T-cell (primary cell): ENCODE measurements at regions of chr1 and their contacts with region 1.

Region 1: DNA sequence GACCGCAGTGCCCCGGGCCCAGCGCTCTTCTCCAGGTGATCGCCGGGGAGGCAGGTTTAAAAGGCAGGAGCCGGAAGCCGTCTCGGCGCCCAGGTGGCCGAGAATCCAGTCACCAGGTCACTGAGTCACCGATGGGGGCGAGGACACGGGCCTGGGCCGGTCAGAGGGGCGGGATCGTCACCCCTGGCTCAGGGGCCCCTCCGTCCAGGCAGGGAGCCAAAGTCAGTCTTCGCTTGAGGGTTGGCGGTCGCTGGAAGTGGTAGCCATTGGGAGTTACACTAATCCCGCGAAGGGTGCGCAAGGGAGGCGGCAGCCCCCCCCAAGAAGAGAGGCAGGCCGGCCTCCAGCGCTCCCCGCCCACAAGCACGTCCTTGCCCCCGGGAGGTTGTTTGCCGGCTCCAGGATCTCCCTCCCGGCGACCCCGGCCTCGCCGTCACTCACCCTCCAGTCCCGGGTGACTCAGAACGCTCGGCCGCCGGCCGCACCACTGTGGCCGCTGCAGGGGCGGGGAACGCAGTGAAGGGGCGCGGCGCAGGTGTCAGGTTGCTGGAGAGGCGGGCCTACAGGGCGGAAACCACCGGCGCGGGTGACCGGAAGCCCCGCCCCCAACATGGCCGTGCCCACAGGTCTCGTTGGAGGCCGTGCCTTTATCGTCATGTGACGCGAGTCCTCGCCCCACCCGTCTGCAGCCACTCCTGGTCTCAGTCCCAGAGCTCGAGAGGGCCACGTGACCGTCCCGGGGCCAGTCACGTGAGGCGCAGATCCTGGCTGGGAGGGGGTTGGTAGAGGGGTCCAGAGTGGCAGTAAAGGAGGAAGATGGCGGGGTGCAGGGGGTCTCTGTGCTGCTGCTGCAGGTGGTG is at the starts of genes CLCN6 and MTHFR:
- DNase-seq: peak; percentile 92 to 99 (median 97)
- ATAC-seq: peak; percentile 87 to 90 (median 87)
- H3K4me3 ChIP-seq: peak within 1 kb of the TSS; percentile 86 to 90
- H3K4me3 Mint-ChIP-seq: peak within 1 kb of the TSS; percentile 92 to 97 (median 93)
- H3K27ac ChIP-seq: peak within 1 kb of the TSS; percentile 84
- H3K27ac Mint-ChIP-seq: peak within 1 kb of the TSS; percentile 95 to 97
- H3K4me1 ChIP-seq: peaks cover 21 to 46% of the 10 kb centered on the region in 2 experiments
- H3K4me1 Mint-ChIP-seq: peaks cover 52 to 65% (median 61%) of the 10 kb centered on the region in 3 donors
- H3K27me3 ChIP-seq: no peaks in the 10 kb centered on the region
- H3K27me3 Mint-ChIP-seq: no peaks in the 10 kb centered on the region
- total RNA-seq, gene CLCN6: 17.3 to 23.0 (median 21.3) TPM
- total RNA-seq, gene MTHFR: 40.2 to 62.2 (median 48.2) TPM

Region 2: GRCh38 chr1:11934302-11935056 is 128.8 kb after region 1 on chr1 and contains the start of gene PLOD1:
- CTCF ChIA-PET with region 1: no interaction called
- POLR2A ChIA-PET with region 1: no interaction called
- DNase-seq: peak; percentile 63 to 91 (median 82)
- ATAC-seq: peak; percentile 100
- H3K4me3 ChIP-seq: peak within 1 kb of the TSS; percentile 60 to 68
- H3K4me3 Mint-ChIP-seq: peak within 1 kb of the TSS; percentile 70 to 82 (median 78)
- H3K27ac ChIP-seq: no peak within 1 kb of the TSS
- H3K27ac Mint-ChIP-seq: peak within 1 kb of the TSS in 1 of 2 donors; percentile 72
- H3K4me1 ChIP-seq: peaks cover 9 to 17% of the 10 kb centered on the region in 2 experiments
- H3K4me1 Mint-ChIP-seq: peaks cover 0 to 7% (median 5%) of the 10 kb centered on the region in 3 donors
- H3K27me3 ChIP-seq: peaks cover 0 to 2% of the 10 kb centered on the region in 2 experiments
- H3K27me3 Mint-ChIP-seq: no peaks in the 10 kb centered on the region
- total RNA-seq, gene PLOD1: 2.6 to 6.9 (median 4.6) TPM

Region 3: DNA sequence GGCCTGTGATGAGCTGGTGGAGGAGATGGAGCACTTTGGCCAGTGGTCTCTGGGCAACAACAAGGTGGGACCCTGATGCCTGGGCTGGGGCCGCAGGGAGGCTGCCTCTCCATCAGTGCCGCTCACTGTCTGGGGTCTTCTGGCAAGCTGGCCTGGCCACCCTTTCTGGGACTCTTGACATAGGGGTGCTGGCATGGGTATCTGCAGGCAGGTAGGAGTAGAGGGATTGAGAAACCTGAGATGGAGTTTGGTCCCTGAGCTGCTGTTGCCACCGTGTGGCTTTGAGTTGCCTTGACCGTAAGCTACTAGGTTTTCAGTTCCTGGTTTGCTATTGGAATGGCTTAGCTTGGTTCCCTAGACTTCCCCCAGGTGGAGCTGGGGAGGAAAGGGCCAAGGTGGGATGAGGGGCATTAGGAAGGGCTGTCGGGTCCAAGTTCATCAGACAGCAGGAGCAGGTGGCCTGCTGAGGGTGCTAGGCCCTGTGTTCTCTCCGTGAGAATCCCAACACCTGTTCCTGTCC is 161.4 kb after region 1 on chr1:
- CTCF ChIA-PET with region 1: interaction called in 1 of 2 experiments, 12 read pairs
- POLR2A ChIA-PET with region 1: no interaction called
- DNase-seq: peak in 2 of 35 experiments; percentile 8 to 32
- ATAC-seq: no peak
- H3K4me3 ChIP-seq: no peak overlapping the region
- H3K4me3 Mint-ChIP-seq: no peak overlapping the region
- H3K27ac ChIP-seq: no peak overlapping the region
- H3K27ac Mint-ChIP-seq: no peak overlapping the region
- H3K4me1 ChIP-seq: no peaks in the 10 kb centered on the region
- H3K4me1 Mint-ChIP-seq: no peaks in the 10 kb centered on the region
- H3K27me3 ChIP-seq: no peaks in the 10 kb centered on the region
- H3K27me3 Mint-ChIP-seq: no peaks in the 10 kb centered on the region